Right ventricle myocardium inferior (tissue), 1 donor: ENCODE measurements at regions of chr2 and their contacts with region 1.

Region 1: DNA sequence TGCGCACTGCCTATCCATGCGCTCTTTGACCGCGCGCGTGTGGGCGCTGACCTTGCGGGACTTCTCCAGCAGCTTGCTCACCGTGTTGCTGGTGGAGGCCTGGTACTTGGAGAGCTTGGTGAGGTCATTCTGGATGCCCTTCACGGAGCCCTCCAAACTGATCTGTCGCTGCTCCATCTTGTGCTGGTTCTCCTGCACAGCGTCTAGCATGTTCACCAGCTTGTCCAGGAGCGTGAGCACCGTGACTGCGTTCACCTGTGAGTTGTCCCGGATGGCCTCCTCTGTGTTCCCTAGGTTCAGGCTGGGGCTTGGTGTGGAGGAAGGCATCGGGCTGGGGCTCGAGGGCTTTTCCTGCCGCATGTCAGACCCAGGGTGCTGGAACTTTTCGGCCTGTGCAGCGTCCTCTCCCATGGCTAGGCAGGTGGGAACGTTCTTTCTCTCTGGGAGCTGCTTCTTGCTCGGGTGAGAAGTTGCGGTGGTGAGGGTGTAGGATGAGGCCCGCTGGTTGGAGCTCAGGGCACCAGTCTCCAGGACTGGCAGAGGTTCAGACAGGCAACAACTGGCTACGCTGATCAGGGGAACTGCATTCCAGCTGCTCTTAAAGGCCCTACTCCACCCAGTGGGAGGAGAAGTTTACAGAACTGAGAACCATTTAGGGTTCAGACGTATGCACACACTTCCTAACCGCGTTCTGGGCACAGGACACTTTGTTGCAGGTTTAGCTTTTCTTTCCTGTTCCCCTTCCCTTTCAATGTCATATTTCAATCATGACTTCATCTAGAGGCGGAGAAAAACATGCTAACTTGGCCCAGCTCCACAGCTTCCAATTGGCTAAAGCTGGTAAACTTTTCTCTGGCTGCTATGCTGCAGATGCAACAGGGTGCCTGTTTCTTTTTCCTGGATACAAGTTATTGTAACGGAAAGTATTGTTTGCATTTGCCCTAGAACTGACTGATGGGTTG is at the start of gene CAVIN2:
- DNase-seq: peak; percentile 75
- ATAC-seq: peak; percentile 87
- total RNA-seq, gene CAVIN2: 109 TPM

Region 2: GRCh38 chr2:191862156-191862775 is 15.5 kb after region 1 on chr2:
- intact Hi-C with region 1: loop called (anchors 1 kb)
- DNase-seq: no peak
- ATAC-seq: peak; percentile 12

Region 3: DNA sequence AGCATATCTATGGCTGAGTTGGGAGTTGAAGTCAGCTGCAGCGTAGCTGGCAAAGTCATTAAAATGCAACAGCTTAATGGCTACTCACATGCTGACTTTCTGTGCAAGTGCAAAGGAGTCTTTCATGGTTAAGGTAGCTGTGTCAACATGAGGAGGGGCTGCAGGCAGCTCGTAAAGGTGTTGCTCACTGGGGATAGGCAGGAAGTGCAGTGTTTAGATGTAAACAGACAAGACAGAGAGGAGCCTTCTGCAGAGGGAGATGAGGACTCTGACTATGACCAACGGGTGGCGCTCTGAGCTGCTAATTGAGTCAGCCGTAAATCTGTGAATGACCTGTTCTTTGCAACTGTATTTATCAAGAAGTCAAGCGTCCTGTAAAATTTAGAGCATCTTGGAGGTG is 22.4 kb after region 1 on chr2:
- intact Hi-C with region 1: loop called (anchors 2 kb)
- DNase-seq: no peak
- ATAC-seq: no peak

Region 4: GRCh38 chr2:192029089-192029488 is 182.3 kb after region 1 on chr2:
- intact Hi-C with region 1: loop called (anchors 5 kb)
- DNase-seq: no peak
- ATAC-seq: no peak

Region 5: GRCh38 chr2:192148620-192149321 is 302.0 kb after region 1 on chr2:
- intact Hi-C with region 1: no loop called
- DNase-seq: no peak
- ATAC-seq: peak; percentile 70